ENCODE measurements at regions of chr19 and their contacts with region 1.

Region 1: DNA sequence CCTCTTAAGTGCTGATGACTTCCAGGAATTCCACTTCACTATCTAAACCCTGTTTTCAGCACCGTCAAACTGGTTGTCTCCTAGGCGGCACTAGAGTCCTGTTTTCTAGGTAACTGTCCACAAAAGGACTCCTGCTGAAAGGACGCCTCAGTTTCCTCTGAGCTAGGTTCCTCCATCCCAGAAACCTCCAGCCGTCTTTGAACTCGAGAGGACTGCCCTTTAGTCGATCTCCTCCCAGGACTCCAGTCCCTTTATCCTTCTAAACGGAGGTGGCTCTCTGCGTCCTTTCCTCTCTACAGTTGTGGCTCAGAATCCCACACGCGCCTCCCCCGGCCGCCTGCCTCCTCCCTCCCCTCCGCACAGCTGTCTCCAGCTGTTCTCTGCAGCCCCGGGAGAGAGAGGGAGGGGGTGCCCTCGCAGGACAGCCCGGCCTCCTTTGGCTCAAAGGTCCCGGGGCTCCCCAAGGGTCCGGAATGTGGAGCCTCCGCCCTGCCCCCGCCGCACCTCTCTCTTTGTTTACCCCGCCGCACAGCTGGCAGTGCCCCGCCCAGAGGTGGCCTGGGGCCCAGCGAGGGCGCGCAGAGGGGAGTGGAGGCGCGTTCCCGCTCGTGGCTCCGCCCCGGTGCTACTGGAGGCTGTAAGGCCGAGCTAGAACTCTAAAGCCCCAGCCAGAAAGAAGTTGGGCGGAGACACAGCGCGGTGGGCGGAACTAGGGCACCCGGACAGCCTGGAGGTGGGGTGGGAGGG is 2.4 kb downstream of the LTBP4 start:
- DNase-seq: peak; percentile 98
- ATAC-seq: peak; percentile 79 to 80

Region 2: GRCh38 chr19:40465557-40466150 is 137.9 kb before region 1 on chr19 and contains the start of gene BLVRB:
- intact Hi-C with region 1: loop called in 1 of 2 experiments (anchors 5 kb)
- DNase-seq: peak; percentile 100
- ATAC-seq: peak; percentile 94 to 95
- total RNA-seq, gene BLVRB: 72.7 to 112 TPM

Region 3: DNA sequence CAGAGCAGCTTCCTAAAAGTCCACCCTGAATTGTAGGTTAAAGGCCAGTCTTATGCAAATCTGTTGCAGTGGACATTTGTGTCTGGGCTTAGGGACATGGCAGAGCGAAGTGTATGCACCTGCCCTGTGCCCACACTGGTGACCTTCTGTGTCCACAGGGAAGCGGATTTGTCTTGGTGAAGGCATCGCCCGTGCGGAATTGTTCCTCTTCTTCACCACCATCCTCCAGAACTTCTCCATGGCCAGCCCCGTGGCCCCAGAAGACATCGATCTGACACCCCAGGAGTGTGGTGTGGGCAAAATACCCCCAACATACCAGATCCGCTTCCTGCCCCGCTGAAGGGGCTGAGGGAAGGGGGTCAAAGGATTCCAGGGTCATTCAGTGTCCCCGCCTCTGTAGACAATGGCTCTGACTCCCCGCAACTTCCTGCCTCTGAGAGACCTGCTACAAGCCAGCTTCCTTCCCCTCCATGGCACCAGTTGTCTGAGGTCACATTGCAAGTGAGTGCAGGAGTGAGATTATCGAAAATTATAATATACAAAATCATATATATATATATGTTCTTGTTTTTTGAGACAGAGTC is 413.0 kb after region 1 on chr19:
- intact Hi-C with region 1: no loop called
- DNase-seq: no peak
- ATAC-seq: no peak

Measured in left cardiac atrium (tissue), 4 donors.